Activated CD4-positive, alpha-beta memory T cell treated with anti-CD3 and anti-CD28 coated beads, Interleukin-2, amount 10 ng/mL, durations not matched to agents 7 days and 5 days (primary cell): ENCODE measurements at regions of chr1 and their contacts with region 1.

Region 1: DNA sequence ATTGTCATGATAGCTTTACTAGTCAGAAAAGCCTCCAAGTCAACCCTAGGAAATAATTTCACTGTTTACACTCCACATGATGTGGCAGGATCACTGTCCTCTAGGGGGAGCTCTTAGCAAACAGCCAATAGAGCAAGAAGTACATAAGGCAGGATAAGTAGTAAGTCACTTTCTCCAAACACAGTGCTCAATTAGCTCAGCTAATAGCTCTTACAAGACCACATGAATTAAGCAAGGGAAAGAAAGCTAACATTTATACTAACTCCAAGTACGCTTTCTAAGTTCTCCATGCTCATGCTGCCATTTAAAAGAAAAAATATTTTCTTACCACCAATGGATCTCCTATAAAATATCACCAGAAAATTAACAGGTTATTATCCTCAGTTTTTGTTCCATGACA is 66.9 kb upstream of the LRIF1 start:
- DNase-seq: peak; percentile 63
- H3K4me3 Mint-ChIP-seq: no peak overlapping the region
- H3K27ac Mint-ChIP-seq: no peak overlapping the region
- H3K4me1 Mint-ChIP-seq: no peaks in the 10 kb centered on the region
- H3K27me3 Mint-ChIP-seq: peaks cover 27% of the 10 kb centered on the region

Region 2: GRCh38 chr1:110893908-110894490 is 136.6 kb before region 1 on chr1:
- CTCF ChIA-PET with region 1: no interaction called
- POLR2A ChIA-PET with region 1: no interaction called
- DNase-seq: no peak
- H3K4me3 Mint-ChIP-seq: no peak overlapping the region
- H3K27ac Mint-ChIP-seq: no peak overlapping the region
- H3K4me1 Mint-ChIP-seq: peaks cover 96% of the 10 kb centered on the region
- H3K27me3 Mint-ChIP-seq: no peaks in the 10 kb centered on the region

Region 3: GRCh38 chr1:110986407-110986891 is 44.1 kb before region 1 on chr1:
- CTCF ChIA-PET with region 1: interaction called, 20 read pairs
- POLR2A ChIA-PET with region 1: no interaction called
- DNase-seq: no peak
- H3K4me3 Mint-ChIP-seq: no peak overlapping the region
- H3K27ac Mint-ChIP-seq: no peak overlapping the region
- H3K4me1 Mint-ChIP-seq: peaks cover 21% of the 10 kb centered on the region
- H3K27me3 Mint-ChIP-seq: peaks cover 8% of the 10 kb centered on the region

Region 4: DNA sequence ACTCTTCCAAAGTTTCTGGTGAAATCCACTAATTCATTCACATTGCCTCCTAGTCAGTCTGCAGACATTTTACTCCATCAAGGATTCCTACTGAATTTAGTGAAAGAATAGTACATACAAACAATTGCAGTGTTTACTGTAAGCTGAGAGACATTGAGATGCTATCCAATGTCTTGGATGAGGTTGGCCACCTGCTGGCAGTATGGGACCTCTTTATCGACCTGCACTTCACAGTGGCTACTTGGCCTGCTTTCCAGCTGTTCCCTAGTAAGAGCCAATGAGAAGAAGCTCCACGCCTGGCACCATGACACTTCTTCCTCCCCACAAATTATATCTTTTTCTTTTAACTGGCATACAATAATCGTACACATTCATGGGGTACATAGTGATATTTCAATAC is 15.4 kb before region 1 on chr1:
- CTCF ChIA-PET with region 1: interaction called, 18 read pairs
- POLR2A ChIA-PET with region 1: no interaction called
- DNase-seq: no peak
- H3K4me3 Mint-ChIP-seq: no peak overlapping the region
- H3K27ac Mint-ChIP-seq: no peak overlapping the region
- H3K4me1 Mint-ChIP-seq: no peaks in the 10 kb centered on the region
- H3K27me3 Mint-ChIP-seq: peaks cover 34% of the 10 kb centered on the region

Region 5: DNA sequence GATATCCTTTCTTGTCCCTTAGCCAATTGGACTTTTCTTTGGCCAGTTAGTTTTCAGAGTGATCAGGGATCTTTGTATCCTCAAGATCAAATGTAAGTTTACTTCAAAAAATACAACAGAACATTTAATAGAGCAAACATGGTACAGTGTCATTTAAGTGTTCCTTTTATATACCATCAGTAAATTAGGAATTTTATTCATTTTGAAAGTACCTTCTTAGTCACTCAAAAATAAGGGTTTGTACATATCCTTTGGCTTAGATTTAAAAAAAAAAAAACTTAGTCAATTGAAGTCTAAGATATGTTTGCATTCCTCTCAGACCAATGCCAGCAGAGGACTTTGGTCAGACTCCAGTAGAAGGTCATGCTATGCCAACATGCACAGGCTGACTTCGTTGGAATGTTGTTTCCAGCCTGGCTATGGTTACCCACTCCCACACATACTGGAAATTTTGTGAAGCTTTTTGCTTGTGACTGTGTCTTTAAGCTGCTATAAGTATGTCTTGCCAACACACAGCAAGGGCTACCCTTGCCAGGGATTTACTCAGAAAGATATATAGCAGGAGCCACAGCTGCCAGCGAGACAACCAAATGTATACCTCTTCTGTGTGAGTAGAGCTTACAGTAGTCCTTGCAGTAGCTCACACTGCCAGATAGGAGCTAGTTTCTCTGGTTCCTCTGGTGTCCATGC is 14.6 kb after region 1 on chr1:
- CTCF ChIA-PET with region 1: interaction called, 19 read pairs
- POLR2A ChIA-PET with region 1: no interaction called
- DNase-seq: no peak
- H3K4me3 Mint-ChIP-seq: no peak overlapping the region
- H3K27ac Mint-ChIP-seq: no peak overlapping the region
- H3K4me1 Mint-ChIP-seq: no peaks in the 10 kb centered on the region
- H3K27me3 Mint-ChIP-seq: peaks cover 42% of the 10 kb centered on the region

Region 6: DNA sequence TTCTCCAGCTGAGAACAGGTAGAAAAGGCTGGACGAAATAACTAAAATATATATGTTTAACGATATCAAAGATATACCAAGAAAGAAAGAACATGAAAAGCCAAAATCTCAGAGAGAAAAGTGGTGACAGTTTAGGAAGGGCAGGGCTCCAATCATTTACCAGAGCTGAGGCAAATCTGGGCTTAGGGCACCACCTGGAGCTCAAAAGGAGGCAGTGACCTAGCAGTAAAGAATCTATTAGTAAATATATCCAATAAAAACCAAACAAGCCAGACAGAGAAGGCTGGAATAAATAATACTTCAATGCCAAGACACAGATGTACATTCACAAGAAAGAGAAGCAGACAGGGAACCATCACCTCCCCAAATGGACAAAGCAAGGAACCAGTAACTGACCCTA is 303.6 kb after region 1 on chr1:
- CTCF ChIA-PET with region 1: interaction called, 10 read pairs
- POLR2A ChIA-PET with region 1: no interaction called
- DNase-seq: peak; percentile 58
- H3K4me3 Mint-ChIP-seq: no peak overlapping the region
- H3K27ac Mint-ChIP-seq: no peak overlapping the region
- H3K4me1 Mint-ChIP-seq: peaks cover 12% of the 10 kb centered on the region
- H3K27me3 Mint-ChIP-seq: peaks cover 2% of the 10 kb centered on the region

Region 7: DNA sequence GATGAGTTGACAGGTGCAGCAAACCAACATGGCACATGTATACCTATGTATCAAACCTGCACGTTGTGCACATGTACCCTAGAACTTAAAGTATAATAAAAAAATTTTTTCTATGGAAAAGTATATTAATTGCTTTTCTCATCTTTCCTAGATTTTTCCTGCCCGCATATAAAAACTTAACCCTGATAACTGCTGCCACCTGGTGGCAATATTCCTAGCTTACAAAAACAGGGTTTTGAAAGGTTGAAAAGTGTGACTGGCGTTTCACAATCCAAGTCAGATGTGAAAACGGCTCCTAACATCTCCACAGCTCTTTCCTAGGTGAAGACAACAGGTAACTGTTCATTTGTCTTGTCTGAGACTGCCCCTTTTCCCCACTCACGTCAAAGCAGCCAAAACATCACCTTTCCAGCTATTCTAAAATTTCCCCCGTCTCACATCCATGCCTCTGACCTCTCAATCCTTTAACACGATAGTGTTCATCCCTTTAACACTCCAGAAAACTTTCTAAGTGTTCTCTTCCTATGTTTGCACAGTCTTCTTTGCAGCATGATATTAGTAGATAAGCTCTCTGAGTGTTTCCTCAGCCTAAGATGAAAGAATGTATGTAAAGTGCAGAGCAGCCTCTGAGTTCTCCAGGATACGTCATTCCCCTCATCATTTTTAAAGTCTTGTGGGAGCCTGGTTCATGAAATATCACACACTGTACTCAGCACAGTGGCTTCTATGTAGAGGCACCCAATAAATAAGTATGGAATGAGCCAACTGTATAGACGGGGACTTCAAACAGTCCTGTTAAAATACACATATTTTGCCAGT is 369.4 kb after region 1 on chr1:
- CTCF ChIA-PET with region 1: interaction called, 19 read pairs
- POLR2A ChIA-PET with region 1: no interaction called
- DNase-seq: peak; percentile 45
- H3K4me3 Mint-ChIP-seq: no peak overlapping the region
- H3K27ac Mint-ChIP-seq: no peak overlapping the region
- H3K4me1 Mint-ChIP-seq: peaks cover 8% of the 10 kb centered on the region
- H3K27me3 Mint-ChIP-seq: peaks cover 43% of the 10 kb centered on the region